ENCODE measurements at regions of chr20 and their contacts with region 1.

Region 1: GRCh38 chr20:32336918-32337347 is 21.2 kb upstream of the ASXL1 start:
- DNase-seq: peak in 1 of 2 experiments; percentile 78
- H3K4me3 ChIP-seq: no peak overlapping the region
- H3K4me3 Mint-ChIP-seq: no peak overlapping the region
- H3K27ac Mint-ChIP-seq: no peak overlapping the region
- H3K4me1 ChIP-seq: peaks cover 8% of the 10 kb centered on the region; the same call in 1 of the 2 replicates
- H3K4me1 Mint-ChIP-seq: peaks cover 16% of the 10 kb centered on the region
- H3K27me3 ChIP-seq: no peaks in the 10 kb centered on the region
- H3K27me3 Mint-ChIP-seq: no peaks in the 10 kb centered on the region
- CTCF ChIP-seq: peak; percentile 93 to 95

Region 2: DNA sequence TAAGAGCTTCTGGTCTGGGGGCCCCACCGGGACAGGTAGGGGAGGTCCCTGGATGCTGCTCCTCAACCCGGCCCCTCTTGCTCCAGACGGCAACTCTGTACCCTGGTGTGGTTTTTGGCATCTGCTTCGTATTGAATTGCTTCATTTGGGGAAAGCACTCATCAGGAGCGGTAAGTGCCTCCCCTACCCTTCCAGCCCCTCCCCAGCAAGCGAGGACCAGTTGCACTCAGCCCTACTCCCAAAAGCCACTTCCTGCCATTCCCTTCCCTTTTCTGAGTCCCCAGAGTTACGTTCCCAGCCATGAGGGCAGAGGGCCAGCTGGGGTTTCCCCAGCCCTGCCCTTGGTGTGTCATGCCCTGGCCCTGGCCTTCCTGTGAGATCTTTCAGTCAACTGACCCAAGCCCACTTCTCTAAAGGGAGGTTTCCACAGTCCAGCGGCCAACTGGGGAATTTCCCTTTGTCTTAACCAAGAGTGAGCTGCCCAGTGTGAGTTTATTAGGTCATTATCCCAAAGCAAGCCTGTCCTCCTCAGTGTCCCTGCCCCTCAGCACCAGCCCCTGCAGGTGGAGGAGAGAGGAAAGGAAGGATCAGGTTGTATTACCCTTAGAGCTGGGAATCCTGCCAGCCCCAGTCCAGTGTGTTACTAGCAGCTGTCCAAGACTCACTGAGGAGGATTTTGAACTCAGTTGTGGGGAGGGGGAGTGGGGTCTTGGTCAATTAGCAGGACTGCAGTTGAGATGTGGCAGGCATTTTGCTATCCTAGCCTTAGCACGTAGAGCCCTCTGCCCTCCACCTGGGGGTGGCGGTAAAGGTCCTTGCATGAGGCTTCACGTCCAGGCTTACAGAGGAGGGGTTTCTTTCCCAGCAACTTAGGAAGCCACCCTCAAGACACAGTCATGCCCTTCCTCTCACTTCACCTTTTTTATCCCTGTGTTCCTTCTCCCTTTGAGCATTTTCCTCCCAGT is 181.6 kb before region 1 on chr20:
- CTCF ChIA-PET with region 1: no interaction called
- POLR2A ChIA-PET with region 1: no interaction called
- intact Hi-C with region 1: loop called (anchors 1 kb)
- DNase-seq: peak; percentile 84 to 86
- H3K4me3 ChIP-seq: no peak overlapping the region
- H3K4me3 Mint-ChIP-seq: no peak overlapping the region
- H3K27ac Mint-ChIP-seq: no peak overlapping the region
- H3K4me1 ChIP-seq: peaks cover 6% of the 10 kb centered on the region
- H3K4me1 Mint-ChIP-seq: peaks cover 8% of the 10 kb centered on the region
- H3K27me3 ChIP-seq: no peaks in the 10 kb centered on the region
- H3K27me3 Mint-ChIP-seq: no peaks in the 10 kb centered on the region
- CTCF ChIP-seq: peak; percentile 73 to 92

Region 3: GRCh38 chr20:32437391-32438074 is 100.6 kb after region 1 on chr20:
- CTCF ChIA-PET with region 1: no interaction called
- POLR2A ChIA-PET with region 1: no interaction called
- intact Hi-C with region 1: loop called (anchors 2 kb)
- DNase-seq: peak; percentile 58 to 69
- H3K4me3 ChIP-seq: no peak overlapping the region
- H3K4me3 Mint-ChIP-seq: no peak overlapping the region
- H3K27ac Mint-ChIP-seq: no peak overlapping the region
- H3K4me1 ChIP-seq: no peaks in the 10 kb centered on the region
- H3K4me1 Mint-ChIP-seq: peaks cover 1% of the 10 kb centered on the region
- H3K27me3 ChIP-seq: no peaks in the 10 kb centered on the region
- H3K27me3 Mint-ChIP-seq: no peaks in the 10 kb centered on the region
- CTCF ChIP-seq: peak; percentile 74 to 89

Measured in Caco-2 (cell line).